ENCODE measurements at regions of chr14 and their contacts with region 1.

Region 1: DNA sequence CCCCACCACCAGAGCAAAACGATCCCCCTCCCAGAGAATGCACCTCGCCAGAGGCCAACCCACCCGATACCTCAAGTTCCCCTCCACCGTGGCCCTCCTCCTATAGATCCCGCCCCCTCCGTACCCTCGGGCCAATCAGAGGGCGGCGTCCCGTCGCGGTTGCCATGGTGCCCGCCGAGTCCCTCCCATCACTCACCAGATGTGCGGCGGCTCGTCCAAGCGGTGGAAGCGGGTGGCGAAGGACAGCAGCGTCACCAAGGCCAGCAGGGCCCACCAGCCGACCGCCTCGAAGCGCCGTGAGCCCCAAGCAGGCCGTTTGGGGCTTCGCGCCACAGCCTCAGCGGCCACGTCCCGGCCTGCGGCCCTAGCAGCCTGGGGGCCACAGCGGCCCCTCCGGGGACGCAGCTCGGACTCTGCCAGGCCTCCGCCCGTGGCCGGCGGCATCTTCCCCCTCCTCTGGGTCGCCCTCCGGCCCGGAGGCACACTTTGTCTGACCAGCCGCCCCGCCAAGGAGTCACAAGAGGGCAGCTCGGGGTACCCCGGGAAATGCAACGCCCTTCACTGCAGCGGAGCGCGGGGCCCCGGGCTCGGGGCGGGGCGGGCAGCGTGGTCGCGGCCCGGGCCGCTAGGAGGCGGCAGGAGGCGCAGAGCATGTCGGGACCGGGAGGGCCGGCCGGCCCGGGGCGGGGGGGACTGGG is at the start of gene POMT2:
- DNase-seq: peak; percentile 98
- H3K4me3 Mint-ChIP-seq: peak within 1 kb of the TSS; percentile 96
- H3K27ac Mint-ChIP-seq: peak within 1 kb of the TSS; percentile 99
- H3K4me1 Mint-ChIP-seq: peaks cover 14% of the 10 kb centered on the region
- H3K27me3 Mint-ChIP-seq: no peaks in the 10 kb centered on the region
- total RNA-seq, gene POMT2: 23.5 and 24.3 TPM in 2 replicates

Region 2: GRCh38 chr14:77040059-77040740 is 280.2 kb before region 1 on chr14:
- intact Hi-C with region 1: loop called (anchors 5 kb)
- DNase-seq: peak; percentile 97
- H3K4me3 Mint-ChIP-seq: peak overlapping the region; percentile 77
- H3K27ac Mint-ChIP-seq: peak overlapping the region; percentile 90
- H3K4me1 Mint-ChIP-seq: peaks cover 76% of the 10 kb centered on the region
- H3K27me3 Mint-ChIP-seq: no peaks in the 10 kb centered on the region

Region 3: GRCh38 chr14:77301103-77301502 is 19.3 kb before region 1 on chr14:
- intact Hi-C with region 1: loop called (anchors 1 kb)
- DNase-seq: peak; percentile 88
- H3K4me3 Mint-ChIP-seq: no peak overlapping the region
- H3K27ac Mint-ChIP-seq: no peak overlapping the region
- H3K4me1 Mint-ChIP-seq: peaks cover 22% of the 10 kb centered on the region
- H3K27me3 Mint-ChIP-seq: no peaks in the 10 kb centered on the region

Region 4: GRCh38 chr14:77457522-77458290 is 137.3 kb after region 1 on chr14 and contains the starts of genes AHSA1 and VIPAS39:
- intact Hi-C with region 1: loop called (anchors 1 kb)
- DNase-seq: peak; percentile 98
- H3K4me3 Mint-ChIP-seq: peak within 1 kb of the TSS; percentile 100
- H3K27ac Mint-ChIP-seq: peak within 1 kb of the TSS; percentile 100
- H3K4me1 Mint-ChIP-seq: peaks cover 27% of the 10 kb centered on the region
- H3K27me3 Mint-ChIP-seq: no peaks in the 10 kb centered on the region
- total RNA-seq, gene AHSA1: 418 and 441 TPM in 2 replicates
- total RNA-seq, gene VIPAS39: 17.7 and 18.5 TPM in 2 replicates

Region 5: GRCh38 chr14:77616454-77617229 is 296.3 kb after region 1 on chr14 and contains the start of gene SPTLC2:
- intact Hi-C with region 1: loop called (anchors 1 kb)
- DNase-seq: peak; percentile 98
- H3K4me3 Mint-ChIP-seq: peak within 1 kb of the TSS; percentile 97
- H3K27ac Mint-ChIP-seq: peak within 1 kb of the TSS; percentile 94
- H3K4me1 Mint-ChIP-seq: peaks cover 42% of the 10 kb centered on the region
- H3K27me3 Mint-ChIP-seq: no peaks in the 10 kb centered on the region
- total RNA-seq, gene SPTLC2: 26.6 and 28.3 TPM in 2 replicates

Region 6: DNA sequence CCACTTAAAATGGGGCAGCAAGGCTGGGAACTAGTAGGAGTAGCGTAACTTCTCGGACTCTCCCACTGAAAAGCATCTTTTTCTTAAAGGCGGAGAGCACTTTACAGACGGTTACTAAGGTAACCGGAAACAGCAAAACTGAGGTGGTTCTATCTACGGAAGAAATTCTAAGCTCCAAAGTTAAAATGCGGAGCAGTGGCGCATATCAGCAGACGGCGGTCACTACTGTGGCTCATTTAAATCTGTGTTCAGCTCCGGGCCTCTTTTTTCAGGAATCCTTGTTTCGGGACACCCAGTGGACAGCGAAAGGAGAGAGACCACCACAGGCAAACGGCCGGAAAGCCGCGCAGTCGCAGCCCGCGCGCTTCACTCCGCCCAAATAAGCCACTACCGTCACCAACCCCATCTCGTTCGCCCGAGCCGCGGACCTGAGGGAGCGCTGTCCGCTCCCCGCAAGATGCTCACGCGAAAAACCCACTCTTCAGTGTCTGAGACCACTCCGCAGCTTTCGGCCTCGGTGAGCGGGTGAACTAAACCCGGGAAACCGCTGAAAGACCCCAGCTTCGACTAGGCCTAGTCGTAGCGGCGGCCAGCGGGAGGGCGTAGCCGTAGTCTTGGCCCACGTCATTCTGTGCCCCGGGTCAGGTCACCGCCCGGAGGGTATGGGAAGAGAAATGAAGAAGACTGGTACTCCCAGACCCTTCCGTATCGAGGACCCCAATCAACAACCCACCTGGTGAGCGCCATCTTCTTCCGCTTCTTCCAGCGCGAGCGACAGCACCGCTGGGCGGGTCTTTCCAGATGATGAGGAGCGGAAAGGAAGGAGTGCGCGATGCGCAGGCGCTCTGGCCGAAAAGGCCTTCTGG is 440.2 kb after region 1 on chr14 and contains the start of gene SNW1:
- intact Hi-C with region 1: loop called (anchors 2 kb)
- DNase-seq: peak; percentile 97
- H3K4me3 Mint-ChIP-seq: peak within 1 kb of the TSS; percentile 94
- H3K27ac Mint-ChIP-seq: peak within 1 kb of the TSS; percentile 99
- H3K4me1 Mint-ChIP-seq: peaks cover 25% of the 10 kb centered on the region
- H3K27me3 Mint-ChIP-seq: peaks cover 6% of the 10 kb centered on the region
- total RNA-seq, gene SNW1: 121 TPM in 2 replicates